Activated CD4-positive, alpha-beta T cell treated with anti-CD3 and anti-CD28 coated beads, Interleukin-2, amount 10 ng/mL, durations not matched to agents 24 days and 14 days (primary cell): ENCODE measurements at regions of chr6 and their contacts with region 1.

Region 1: GRCh38 chr6:20401205-20402091 is at the start of gene E2F3:
- DNase-seq: peak; percentile 100
- H3K4me3 Mint-ChIP-seq: peak within 1 kb of the TSS; percentile 94
- H3K27ac Mint-ChIP-seq: peak within 1 kb of the TSS; percentile 99
- H3K4me1 Mint-ChIP-seq: peaks cover 27% of the 10 kb centered on the region
- H3K27me3 Mint-ChIP-seq: no peaks in the 10 kb centered on the region
- total RNA-seq, gene E2F3: 27.1 and 28.0 TPM in 2 replicates

Region 2: DNA sequence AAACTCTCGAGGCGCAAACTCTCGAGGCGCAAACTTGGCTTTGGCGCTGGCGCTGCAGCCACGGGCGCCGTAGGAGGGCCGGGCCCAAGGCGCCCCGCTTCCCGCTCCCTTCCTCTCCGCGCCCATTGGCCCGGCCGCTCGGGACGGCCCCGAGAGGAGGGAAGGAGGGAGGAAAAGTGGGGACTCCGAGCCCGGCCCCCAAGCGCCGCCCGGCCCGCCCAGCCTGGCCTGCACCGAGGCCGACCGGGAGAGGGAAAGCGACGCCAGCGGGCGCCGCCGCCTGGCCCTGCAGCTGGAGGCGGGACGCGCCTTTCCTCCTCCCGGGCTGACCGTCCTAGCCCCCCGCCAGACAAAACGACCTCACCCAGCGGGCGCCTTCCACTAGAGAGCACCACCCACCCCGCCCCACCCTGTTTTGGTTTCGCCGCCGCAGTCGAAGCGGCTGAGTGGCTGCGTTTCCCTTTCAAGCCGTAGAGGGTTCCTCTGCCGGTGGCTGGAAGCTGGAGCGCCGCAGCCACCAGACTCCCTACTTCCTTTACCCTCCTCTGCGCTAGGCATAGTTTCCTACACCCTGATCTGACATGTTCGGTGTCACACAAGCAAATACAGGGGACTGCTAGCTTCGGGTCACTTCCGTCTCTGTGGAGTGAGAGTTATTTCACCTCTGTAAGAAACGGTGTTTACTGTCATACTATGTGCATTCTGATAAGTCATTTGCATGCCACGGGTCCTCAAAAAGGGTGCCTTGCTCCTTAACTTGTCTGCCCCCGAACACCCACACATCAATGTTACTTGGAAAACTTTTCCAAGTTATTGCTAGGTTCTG is 188.8 kb before region 1 on chr6 and contains the start of gene MBOAT1:
- intact Hi-C with region 1: loop called (anchors 1 kb)
- DNase-seq: peak; percentile 94
- H3K4me3 Mint-ChIP-seq: peak within 1 kb of the TSS; percentile 91
- H3K27ac Mint-ChIP-seq: peak within 1 kb of the TSS; percentile 91
- H3K4me1 Mint-ChIP-seq: peaks cover 38% of the 10 kb centered on the region
- H3K27me3 Mint-ChIP-seq: peaks cover 2% of the 10 kb centered on the region
- total RNA-seq, gene MBOAT1: 11.8 and 12.8 TPM in 2 replicates

Region 3: GRCh38 chr6:20266851-20267608 is 134.4 kb before region 1 on chr6:
- intact Hi-C with region 1: no loop called
- DNase-seq: peak; percentile 48
- H3K4me3 Mint-ChIP-seq: no peak overlapping the region
- H3K27ac Mint-ChIP-seq: peak overlapping the region; percentile 2
- H3K4me1 Mint-ChIP-seq: peaks cover 6% of the 10 kb centered on the region
- H3K27me3 Mint-ChIP-seq: peaks cover 5% of the 10 kb centered on the region

Region 4: DNA sequence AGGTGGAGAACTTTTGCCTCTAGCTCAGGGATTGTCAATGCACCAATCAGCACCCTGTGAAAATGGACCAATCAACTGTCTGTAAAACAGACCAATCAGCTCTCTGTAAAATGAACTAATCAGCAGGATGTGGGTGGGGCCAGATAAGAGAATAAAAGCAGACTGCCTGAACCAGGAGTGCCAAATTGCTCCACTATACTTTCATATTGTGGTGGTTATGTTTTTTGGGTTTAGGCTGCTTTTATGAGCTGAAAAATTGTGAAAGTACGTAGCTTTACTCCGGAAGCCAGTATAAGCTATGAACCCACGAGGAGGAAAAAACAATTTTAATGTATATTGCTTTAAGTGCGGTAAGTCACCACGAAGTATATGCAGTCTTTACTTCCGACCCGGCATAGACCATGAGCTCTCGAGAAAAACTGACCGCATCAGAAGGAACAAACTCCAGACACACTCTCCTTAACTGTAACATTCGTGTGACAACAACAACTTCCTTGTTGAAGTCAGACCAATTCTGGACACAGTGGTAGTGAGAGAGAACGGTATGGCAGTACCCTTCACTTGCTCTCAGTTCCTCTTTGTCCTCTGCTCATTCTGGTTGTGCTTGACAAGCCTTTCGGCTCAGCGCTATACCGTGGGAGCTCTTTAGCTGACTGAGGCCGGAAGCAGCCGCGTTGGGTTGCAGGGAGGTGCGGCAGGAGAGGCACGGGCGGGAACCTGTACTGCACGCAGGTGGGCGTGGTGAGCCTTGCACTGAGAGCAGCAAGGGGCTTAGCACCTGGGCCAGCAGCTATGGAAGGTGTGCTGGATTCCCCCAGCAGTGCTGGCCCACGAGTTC is 81.7 kb before region 1 on chr6:
- intact Hi-C with region 1: loop called (anchors 1 kb)
- DNase-seq: peak; percentile 92
- H3K4me3 Mint-ChIP-seq: peak overlapping the region; percentile 83
- H3K27ac Mint-ChIP-seq: peak overlapping the region; percentile 94
- H3K4me1 Mint-ChIP-seq: peaks cover 12% of the 10 kb centered on the region
- H3K27me3 Mint-ChIP-seq: peaks cover 13% of the 10 kb centered on the region

Region 5: DNA sequence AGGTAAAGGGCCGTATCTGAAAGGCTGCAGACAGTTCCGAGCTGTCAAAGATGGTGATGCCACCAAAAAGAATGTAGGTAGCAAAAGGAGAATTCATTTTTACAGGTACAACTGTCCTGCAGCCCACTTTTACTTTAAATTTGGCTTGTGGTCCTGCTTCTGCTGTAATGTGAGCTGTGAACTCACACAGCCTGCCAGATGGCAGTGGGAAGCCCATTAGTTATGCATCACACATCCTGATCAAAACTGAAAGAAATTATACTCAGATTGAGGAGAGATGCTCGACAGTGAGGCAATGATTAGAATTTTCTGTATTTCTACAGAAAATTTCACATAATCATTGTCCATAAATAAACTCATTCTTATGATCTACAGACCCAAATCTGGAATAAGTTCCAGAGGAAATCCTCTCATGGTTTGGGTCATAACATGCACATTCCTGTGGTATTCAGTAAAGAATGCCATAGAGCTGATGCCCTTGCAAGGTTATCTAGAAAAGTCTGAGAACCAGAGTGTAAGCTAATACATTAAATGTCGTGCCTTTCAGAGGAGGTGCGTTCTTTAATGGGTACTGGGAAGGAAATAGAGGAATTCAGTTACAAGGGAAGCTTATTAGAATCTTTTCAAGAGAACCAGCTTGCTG is 23.7 kb before region 1 on chr6:
- intact Hi-C with region 1: no loop called
- DNase-seq: peak; percentile 60
- H3K4me3 Mint-ChIP-seq: no peak overlapping the region
- H3K27ac Mint-ChIP-seq: no peak overlapping the region
- H3K4me1 Mint-ChIP-seq: peaks cover 18% of the 10 kb centered on the region
- H3K27me3 Mint-ChIP-seq: no peaks in the 10 kb centered on the region

Region 6: DNA sequence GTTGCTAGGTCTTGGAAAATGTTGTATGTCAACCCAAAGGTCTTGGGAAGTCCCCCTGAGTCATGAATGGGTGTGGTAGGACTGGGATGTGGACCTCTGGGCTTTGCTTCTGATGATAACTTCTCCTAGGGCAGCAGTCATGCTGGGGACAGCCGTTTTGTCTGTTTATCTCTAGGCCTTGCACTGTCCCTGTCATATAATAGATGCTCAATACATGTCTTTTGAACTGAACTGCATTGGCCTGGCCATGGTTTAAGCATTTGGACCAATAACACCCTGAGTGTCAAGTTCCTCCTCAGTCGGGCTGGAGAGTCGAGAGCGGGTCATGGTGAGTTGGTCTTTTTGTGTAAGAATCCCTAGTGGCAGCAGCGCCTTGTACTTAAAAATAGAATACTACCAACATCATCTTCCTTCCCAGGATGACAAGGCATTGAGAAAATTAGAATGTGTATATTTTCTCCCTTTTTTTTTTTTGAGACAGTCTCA is 43.4 kb after region 1 on chr6:
- intact Hi-C with region 1: loop called (anchors 5 kb)
- DNase-seq: no peak
- H3K4me3 Mint-ChIP-seq: no peak overlapping the region
- H3K27ac Mint-ChIP-seq: peak overlapping the region; percentile 72
- H3K4me1 Mint-ChIP-seq: peaks cover 26% of the 10 kb centered on the region
- H3K27me3 Mint-ChIP-seq: no peaks in the 10 kb centered on the region

Region 7: GRCh38 chr6:20542927-20543602 is 141.6 kb after region 1 on chr6:
- intact Hi-C with region 1: loop called (anchors 1 kb)
- DNase-seq: peak; percentile 82
- H3K4me3 Mint-ChIP-seq: peak overlapping the region; percentile 38
- H3K27ac Mint-ChIP-seq: peak overlapping the region; percentile 88
- H3K4me1 Mint-ChIP-seq: peaks cover 43% of the 10 kb centered on the region
- H3K27me3 Mint-ChIP-seq: no peaks in the 10 kb centered on the region